ENCODE measurements at regions of chr15 and their contacts with region 1.

Region 1: DNA sequence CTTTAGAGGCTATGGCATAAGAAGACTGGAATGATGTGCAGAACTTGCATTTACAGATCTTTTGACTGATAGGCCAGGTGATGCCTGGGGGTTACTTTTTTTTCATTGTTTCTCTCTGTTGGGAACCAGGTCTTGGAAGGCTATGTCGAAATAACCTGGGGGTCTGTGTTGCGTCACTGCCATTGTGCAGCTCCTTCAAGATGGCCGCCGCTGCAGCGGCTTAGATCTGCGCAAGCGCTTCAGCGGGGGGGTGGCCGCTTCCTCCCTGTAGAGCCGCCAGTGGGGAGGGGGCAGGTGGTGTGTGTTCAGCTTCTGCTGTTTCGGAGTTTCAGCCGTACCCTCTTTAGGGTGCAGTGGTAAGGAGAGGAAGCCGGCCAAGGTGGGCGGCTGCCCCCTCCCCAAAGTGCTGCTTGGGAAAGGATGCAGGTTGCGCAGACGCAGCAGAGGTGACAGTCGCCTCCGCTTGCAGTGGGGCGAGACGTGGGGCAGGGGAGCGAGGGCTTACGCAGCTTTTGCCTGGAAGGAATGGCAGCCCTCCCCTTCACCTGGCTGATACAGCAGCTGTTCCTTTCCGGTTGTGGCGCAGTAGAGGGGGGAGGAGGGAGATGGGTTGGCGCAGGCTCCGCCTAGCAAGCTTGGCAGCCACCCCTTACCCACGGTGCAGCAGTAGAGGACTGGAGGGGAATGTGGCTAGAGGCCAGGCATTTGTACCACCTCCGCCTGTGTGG is 1.5 kb downstream of the SNRPN start:
- DNase-seq: peak; percentile 81

Region 2: GRCh38 chr15:24661512-24661911 is 294.8 kb before region 1 on chr15:
- intact Hi-C with region 1: no loop called
- DNase-seq: no peak

Region 3: GRCh38 chr15:24856397-24857390 is 99.6 kb before region 1 on chr15:
- intact Hi-C with region 1: loop called (anchors 5 kb)
- DNase-seq: no peak